Heart right ventricle (tissue), 16 donors: ENCODE measurements at regions of chr7 and their contacts with region 1.

Region 1: DNA sequence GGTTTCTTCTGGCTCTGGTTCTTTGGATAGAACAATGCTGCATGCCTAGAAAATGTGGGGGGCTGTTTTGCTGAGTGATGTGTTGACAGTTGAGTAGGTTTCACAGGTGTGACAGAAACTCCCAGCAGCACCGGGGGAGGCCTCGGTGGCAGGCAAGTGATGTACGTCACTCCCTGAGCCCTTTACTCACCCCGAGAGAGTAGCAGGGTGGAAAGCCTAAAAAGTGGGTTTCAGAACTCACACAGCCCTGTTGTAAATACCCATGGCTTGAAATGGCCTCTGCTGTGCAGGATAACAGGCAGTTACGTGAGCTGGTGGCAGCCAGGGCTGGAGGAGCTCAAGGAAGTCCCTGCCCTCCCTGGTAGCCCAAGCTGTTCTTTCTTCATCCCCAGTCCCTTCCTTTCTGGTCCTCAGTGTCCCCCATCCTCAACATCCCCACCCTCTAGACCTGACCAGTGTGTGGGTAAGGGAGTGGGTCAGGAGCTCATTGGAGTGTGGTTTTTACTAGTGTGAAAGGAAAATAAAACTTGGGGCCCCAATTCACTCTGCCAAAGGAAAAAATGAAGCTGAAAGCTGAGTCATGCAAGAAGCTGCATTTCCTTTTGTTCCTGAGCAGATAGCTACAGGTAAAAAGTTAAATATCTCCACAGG is 258.1 kb downstream of the STK31 start:
- DNase-seq: no peak
- ATAC-seq: no peak
- H3K4me3 ChIP-seq: no peak overlapping the region
- H3K27ac ChIP-seq: no peak overlapping the region
- H3K4me1 ChIP-seq: no peaks in the 10 kb centered on the region
- H3K27me3 ChIP-seq: peaks cover 0 to 3% (median 0%) of the 10 kb centered on the region in 7 donors
- CTCF ChIP-seq: no peak

Region 2: DNA sequence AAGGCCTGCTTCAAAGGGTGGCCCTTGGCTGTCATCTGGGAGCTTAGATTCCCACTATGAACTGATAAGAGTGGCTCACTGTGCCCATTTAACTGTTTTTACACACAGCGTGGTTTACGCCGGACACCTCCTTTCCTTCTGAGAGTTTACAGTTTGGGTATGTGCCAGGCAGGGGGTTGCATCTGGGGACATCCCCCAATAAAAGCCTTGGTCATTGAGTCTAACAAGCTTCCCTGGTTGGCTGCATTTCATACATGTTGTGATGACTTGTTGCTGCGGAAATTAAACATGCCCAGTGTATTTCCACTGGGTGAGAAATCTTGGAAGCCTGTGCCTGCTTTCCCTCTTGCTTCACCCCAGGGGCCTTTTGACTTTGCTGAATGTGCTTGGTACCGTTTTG is 51.8 kb after region 1 on chr7:
- intact Hi-C with region 1: loop called in 1 of 10 experiments (anchors 2 kb)
- DNase-seq: no peak
- ATAC-seq: no peak
- H3K4me3 ChIP-seq: no peak overlapping the region
- H3K27ac ChIP-seq: no peak overlapping the region
- H3K4me1 ChIP-seq: no peaks in the 10 kb centered on the region
- H3K27me3 ChIP-seq: no peaks in the 10 kb centered on the region
- CTCF ChIP-seq: no peak